CD8-positive, alpha-beta T cell (primary cell): ENCODE measurements at regions of chr10 and their contacts with region 1.

Region 1: DNA sequence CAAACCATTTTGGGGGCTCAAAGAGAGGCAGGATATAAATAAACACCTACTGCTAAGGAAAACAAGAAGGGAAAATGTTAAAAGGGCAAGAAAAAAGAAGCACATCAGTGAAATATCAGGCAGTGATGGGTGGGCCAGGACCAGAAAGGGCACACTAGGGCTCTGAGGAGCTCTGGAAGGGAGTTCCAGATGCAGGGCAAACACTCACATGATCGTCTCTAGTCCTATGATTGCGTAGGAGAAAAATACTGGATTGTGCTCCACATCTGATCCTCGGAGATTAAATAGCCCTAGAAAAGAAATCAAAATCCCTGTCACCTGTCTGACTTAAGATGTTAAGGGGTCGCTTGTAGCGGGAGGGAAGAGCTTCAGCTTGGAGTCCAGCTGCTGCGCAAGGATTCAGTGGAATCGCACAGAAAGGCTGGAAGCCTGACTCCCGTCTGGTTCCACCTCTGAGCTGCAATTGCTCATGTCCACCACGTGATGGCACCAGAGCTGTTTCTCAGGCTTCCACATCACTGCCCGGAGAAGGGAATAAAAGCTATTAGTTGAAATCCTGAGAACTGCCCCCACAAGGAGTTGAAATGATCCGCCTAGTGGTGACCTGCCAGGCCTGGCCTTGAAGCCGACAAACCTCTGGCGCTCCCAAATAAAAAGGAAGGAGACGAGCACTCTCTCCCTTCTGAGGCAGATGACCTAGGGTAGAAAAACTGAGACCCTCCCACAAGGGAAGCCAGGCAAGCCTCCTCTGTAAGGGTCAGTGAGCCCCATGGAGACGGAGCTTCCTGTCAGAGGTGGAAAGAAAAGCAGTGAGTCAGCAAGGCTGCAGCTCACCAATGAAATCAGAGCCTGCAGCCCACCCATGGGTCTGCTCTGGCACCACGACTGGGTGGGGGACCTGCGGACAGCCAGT is 39.2 kb downstream of the XPNPEP1 start:
- DNase-seq: peak; percentile 22 to 80 (median 63)
- ATAC-seq: peak; percentile 94
- H3K4me3 ChIP-seq: no peak overlapping the region
- H3K4me3 Mint-ChIP-seq: no peak overlapping the region
- H3K27ac ChIP-seq: no peak overlapping the region
- H3K27ac Mint-ChIP-seq: no peak overlapping the region
- H3K4me1 ChIP-seq: no peaks in the 10 kb centered on the region
- H3K4me1 Mint-ChIP-seq: peaks cover 4% of the 10 kb centered on the region
- H3K27me3 ChIP-seq: no peaks in the 10 kb centered on the region
- H3K27me3 Mint-ChIP-seq: no peaks in the 10 kb centered on the region
- CTCF ChIP-seq: peak; percentile 99

Region 2: GRCh38 chr10:109894516-109894915 is 10.4 kb after region 1 on chr10:
- CTCF ChIA-PET with region 1: interaction called, 33 read pairs
- POLR2A ChIA-PET with region 1: no interaction called
- intact Hi-C with region 1: no loop called
- DNase-seq: no peak
- ATAC-seq: no peak
- H3K4me3 ChIP-seq: no peak overlapping the region
- H3K4me3 Mint-ChIP-seq: no peak overlapping the region
- H3K27ac ChIP-seq: no peak overlapping the region
- H3K27ac Mint-ChIP-seq: no peak overlapping the region
- H3K4me1 ChIP-seq: peaks cover 4% of the 10 kb centered on the region
- H3K4me1 Mint-ChIP-seq: peaks cover 56% of the 10 kb centered on the region
- H3K27me3 ChIP-seq: no peaks in the 10 kb centered on the region
- H3K27me3 Mint-ChIP-seq: no peaks in the 10 kb centered on the region
- CTCF ChIP-seq: no peak

Region 3: DNA sequence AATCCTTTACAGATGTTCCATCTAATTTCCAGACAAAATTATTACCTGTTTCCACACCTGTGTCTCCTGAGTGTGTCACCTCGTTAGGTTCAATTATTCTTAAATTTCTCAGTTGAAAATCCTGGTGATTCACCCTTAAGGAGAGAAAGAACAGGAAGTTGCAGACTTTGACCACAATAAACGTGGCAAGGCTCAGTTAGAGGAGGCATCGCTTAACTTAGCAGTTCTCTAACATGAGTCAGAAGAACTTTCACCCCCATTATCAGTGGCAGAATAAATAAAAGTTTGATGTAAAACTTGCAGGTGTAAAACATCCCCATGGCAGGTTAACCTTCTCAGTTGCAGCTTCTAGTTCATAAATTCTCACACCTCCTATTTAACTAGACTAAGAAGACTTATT is 30.9 kb after region 1 on chr10:
- CTCF ChIA-PET with region 1: interaction called, 21 read pairs
- POLR2A ChIA-PET with region 1: interaction called, 5 read pairs
- intact Hi-C with region 1: loop called (anchors 5 kb)
- DNase-seq: peak in 7 of 9 experiments; percentile 25 to 86 (median 55)
- ATAC-seq: peak; percentile 88
- H3K4me3 ChIP-seq: no peak overlapping the region
- H3K4me3 Mint-ChIP-seq: peak overlapping the region; percentile 62
- H3K27ac ChIP-seq: peak overlapping the region in 1 of 2 experiments; percentile 74
- H3K27ac Mint-ChIP-seq: peak overlapping the region; percentile 55
- H3K4me1 ChIP-seq: peaks cover 40% of the 10 kb centered on the region
- H3K4me1 Mint-ChIP-seq: peaks cover 83% of the 10 kb centered on the region
- H3K27me3 ChIP-seq: no peaks in the 10 kb centered on the region
- H3K27me3 Mint-ChIP-seq: no peaks in the 10 kb centered on the region
- CTCF ChIP-seq: no peak

Region 4: GRCh38 chr10:109956454-109957091 is 72.5 kb after region 1 on chr10:
- CTCF ChIA-PET with region 1: interaction called, 13 read pairs
- POLR2A ChIA-PET with region 1: interaction called, 3 read pairs
- intact Hi-C with region 1: loop called (anchors 1 to 5 kb)
- DNase-seq: peak in 3 of 9 experiments; percentile 13 to 57 (median 45)
- ATAC-seq: peak; percentile 31
- H3K4me3 ChIP-seq: no peak overlapping the region
- H3K4me3 Mint-ChIP-seq: no peak overlapping the region
- H3K27ac ChIP-seq: no peak overlapping the region
- H3K27ac Mint-ChIP-seq: no peak overlapping the region
- H3K4me1 ChIP-seq: no peaks in the 10 kb centered on the region
- H3K4me1 Mint-ChIP-seq: peaks cover 20% of the 10 kb centered on the region
- H3K27me3 ChIP-seq: no peaks in the 10 kb centered on the region
- H3K27me3 Mint-ChIP-seq: no peaks in the 10 kb centered on the region
- CTCF ChIP-seq: peak; percentile 31

Region 5: DNA sequence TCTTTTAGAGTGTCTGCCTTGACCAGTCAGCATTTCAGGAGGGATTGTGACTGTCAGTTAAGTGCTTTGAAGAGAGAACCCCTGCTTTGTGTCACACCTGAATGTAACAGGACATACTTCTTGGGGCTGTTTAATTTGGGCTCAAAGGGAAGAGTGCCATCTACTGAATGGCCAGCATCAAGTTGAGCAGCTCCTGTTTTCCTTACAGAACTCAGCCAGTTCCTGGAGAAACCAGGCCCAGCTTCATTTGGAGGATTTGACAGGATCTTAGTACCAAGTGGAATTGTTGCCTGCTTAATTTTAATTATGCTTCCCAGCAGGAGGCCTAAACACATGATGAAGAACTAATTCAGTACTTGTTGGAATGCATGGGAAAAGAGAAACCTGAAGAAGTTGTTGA is 131.9 kb after region 1 on chr10:
- CTCF ChIA-PET with region 1: interaction called, 18 read pairs
- POLR2A ChIA-PET with region 1: no interaction called
- intact Hi-C with region 1: loop called in 1 of 2 experiments (anchors 1 kb)
- DNase-seq: peak in 2 of 9 experiments; percentile 39 to 52
- ATAC-seq: no peak
- H3K4me3 ChIP-seq: no peak overlapping the region
- H3K4me3 Mint-ChIP-seq: peak overlapping the region; percentile 42
- H3K27ac ChIP-seq: no peak overlapping the region
- H3K27ac Mint-ChIP-seq: peak overlapping the region; percentile 56
- H3K4me1 ChIP-seq: peaks cover 90% of the 10 kb centered on the region
- H3K4me1 Mint-ChIP-seq: peaks cover 87% of the 10 kb centered on the region
- H3K27me3 ChIP-seq: no peaks in the 10 kb centered on the region
- H3K27me3 Mint-ChIP-seq: no peaks in the 10 kb centered on the region
- CTCF ChIP-seq: peak; percentile 16

Region 6: DNA sequence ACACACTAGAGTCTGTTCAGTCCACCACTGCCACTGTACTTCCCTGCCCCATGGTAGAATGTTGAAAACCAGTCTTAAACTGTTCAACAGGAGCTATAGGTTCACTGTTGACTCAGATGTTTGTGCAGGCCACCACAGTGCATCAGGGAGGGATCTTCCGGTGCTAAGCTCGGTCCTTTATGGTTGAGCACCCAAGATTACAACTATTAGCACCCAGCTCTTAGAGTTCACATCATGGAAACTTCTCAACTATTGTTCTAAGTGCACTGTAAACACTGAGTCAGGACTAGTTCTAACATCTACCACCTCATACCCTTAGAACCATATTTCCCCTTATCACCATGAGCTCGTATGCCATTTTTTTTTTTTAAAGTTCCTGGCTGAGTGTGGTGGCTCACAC is 226.2 kb after region 1 on chr10:
- CTCF ChIA-PET with region 1: interaction called, 15 read pairs
- POLR2A ChIA-PET with region 1: no interaction called
- intact Hi-C with region 1: loop called (anchors 5 kb)
- DNase-seq: peak in 2 of 9 experiments; percentile 7 to 14
- ATAC-seq: no peak
- H3K4me3 ChIP-seq: no peak overlapping the region
- H3K4me3 Mint-ChIP-seq: no peak overlapping the region
- H3K27ac ChIP-seq: no peak overlapping the region
- H3K27ac Mint-ChIP-seq: peak overlapping the region; percentile 84
- H3K4me1 ChIP-seq: no peaks in the 10 kb centered on the region
- H3K4me1 Mint-ChIP-seq: peaks cover 31% of the 10 kb centered on the region
- H3K27me3 ChIP-seq: no peaks in the 10 kb centered on the region
- H3K27me3 Mint-ChIP-seq: no peaks in the 10 kb centered on the region
- CTCF ChIP-seq: no peak

Region 7: DNA sequence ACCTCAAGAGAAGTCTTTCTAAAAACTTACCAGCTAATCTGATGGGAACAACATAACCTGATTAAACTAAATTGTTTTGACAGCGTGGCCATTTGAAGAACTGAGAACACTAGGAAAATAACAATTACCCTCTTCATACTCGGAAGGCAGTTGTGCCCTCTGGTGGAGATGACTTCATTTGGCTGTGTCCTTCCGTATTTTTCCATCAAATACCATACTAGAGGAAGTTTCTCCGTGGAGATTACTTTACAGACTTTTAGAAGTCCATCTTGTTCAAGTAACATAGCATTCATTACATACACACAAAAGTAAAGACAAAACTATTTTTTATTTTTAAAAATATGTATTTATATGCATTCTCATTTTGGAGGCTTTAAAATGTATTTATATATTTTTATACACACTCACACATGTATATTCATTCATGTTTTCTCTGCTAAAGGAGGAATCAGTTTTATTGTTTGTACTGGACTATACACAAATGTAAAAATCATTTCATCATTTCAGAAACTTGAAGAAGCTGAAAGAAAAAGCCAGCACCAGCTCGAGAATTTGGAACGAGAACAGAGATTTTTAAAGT is 395.4 kb after region 1 on chr10:
- CTCF ChIA-PET with region 1: interaction called, 8 read pairs
- POLR2A ChIA-PET with region 1: no interaction called
- intact Hi-C with region 1: loop called (anchors 2 to 5 kb)
- DNase-seq: peak in 8 of 9 experiments; percentile 6 to 76 (median 44)
- ATAC-seq: peak; percentile 81
- H3K4me3 ChIP-seq: no peak overlapping the region
- H3K4me3 Mint-ChIP-seq: no peak overlapping the region
- H3K27ac ChIP-seq: no peak overlapping the region
- H3K27ac Mint-ChIP-seq: no peak overlapping the region
- H3K4me1 ChIP-seq: peaks cover under 1% of the 10 kb centered on the region
- H3K4me1 Mint-ChIP-seq: peaks cover 15% of the 10 kb centered on the region
- H3K27me3 ChIP-seq: no peaks in the 10 kb centered on the region
- H3K27me3 Mint-ChIP-seq: no peaks in the 10 kb centered on the region
- CTCF ChIP-seq: peak; percentile 77